Endothelial cell of umbilical vein (primary cell): ENCODE measurements at regions of chr1 and their contacts with region 1.

Region 1: GRCh38 chr1:108125312-108126138 is 74.6 kb downstream of the SLC25A24 start:
- DNase-seq: peak; percentile 78
- H3K4me3 ChIP-seq: no peak overlapping the region
- H3K27ac ChIP-seq: no peak overlapping the region
- H3K4me1 ChIP-seq: no peaks in the 10 kb centered on the region
- H3K27me3 ChIP-seq: no peaks in the 10 kb centered on the region
- CTCF ChIP-seq: peak; percentile 86
- POLR2A ChIP-seq: no peak

Region 2: DNA sequence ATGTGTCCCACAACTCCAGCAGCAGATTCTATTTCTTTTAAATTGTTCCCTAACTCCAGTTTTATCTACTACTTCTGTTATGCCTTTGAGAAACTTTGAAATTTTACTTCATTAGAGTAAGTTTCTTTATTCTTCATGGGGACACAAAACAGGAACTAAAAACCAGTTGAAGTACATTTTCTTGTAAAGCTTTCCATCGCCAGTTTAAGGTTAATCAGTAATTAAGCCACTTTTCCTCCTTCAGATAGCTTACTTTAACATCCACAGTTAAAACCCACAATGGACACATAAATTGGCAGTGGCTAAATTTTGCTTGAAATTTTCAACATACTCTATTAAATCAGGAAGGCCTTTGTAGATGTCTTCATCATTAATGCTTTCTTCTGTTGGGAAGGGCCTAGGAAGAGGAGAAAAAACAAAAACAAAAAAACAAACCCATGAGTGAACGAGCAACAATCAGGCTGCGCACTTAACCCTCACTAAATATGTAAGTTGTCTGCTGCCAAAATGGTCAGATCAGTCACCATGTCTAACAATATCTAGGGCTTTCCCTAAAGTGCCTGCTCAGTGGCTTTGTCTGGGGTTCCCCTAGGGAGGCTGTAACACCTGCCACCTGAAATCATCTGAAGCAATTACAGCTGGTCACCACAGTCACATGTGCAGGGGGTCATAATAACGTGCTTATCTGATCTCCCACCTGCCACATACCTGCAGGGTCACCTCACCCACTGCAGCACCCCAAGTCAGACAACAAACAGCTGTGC is 348.4 kb before region 1 on chr1:
- CTCF ChIA-PET with region 1: interaction called, 919 read pairs
- POLR2A ChIA-PET with region 1: interaction called, 3 read pairs
- dilution Hi-C with region 1: no loop called
- intact Hi-C with region 1: loop called (anchors 1 kb)
- DNase-seq: no peak
- H3K4me3 ChIP-seq: no peak overlapping the region
- H3K27ac ChIP-seq: no peak overlapping the region
- H3K4me1 ChIP-seq: no peaks in the 10 kb centered on the region
- H3K27me3 ChIP-seq: no peaks in the 10 kb centered on the region
- CTCF ChIP-seq: no peak
- POLR2A ChIP-seq: no peak

Region 3: GRCh38 chr1:107897438-107898345 is 227.8 kb before region 1 on chr1:
- CTCF ChIA-PET with region 1: interaction called, 16 read pairs
- POLR2A ChIA-PET with region 1: no interaction called
- dilution Hi-C with region 1: no loop called
- intact Hi-C with region 1: no loop called
- DNase-seq: peak; percentile 20
- H3K4me3 ChIP-seq: no peak overlapping the region
- H3K27ac ChIP-seq: no peak overlapping the region
- H3K4me1 ChIP-seq: no peaks in the 10 kb centered on the region
- H3K27me3 ChIP-seq: no peaks in the 10 kb centered on the region
- CTCF ChIP-seq: no peak
- POLR2A ChIP-seq: no peak

Region 4: DNA sequence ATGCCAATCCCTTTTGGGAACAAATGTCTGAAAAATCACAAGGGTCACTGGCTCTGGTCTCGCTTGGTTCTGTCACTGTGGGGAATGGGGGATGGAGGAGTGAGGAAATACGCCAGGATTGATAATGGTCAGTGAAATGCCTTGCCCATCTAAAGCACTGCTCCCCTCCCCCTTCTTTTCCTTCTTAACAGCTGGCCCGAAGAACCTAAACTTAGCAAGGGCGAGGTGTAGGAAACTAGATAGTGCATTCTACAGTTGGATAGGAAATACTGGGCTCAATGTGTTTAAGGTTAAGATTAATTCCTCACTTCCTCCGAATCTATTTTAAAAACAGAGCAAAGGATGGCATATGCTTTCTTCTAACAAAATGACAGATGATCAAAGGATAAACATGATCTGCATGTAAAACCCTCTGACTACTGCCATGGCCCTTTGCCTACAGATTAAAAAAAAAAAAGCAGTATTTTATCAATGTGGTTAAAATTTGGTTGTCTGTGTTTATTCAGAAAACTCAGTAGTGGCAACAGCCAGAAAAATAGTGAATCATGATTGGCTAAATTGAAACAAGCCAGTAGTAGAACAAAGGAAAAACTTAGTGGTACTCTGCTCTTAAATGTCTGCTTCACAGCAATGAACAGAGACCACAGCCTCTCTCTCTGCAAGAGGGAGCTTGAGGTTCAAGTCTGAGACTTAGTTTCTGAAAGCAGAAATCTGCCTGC is 74.5 kb before region 1 on chr1:
- CTCF ChIA-PET with region 1: no interaction called
- POLR2A ChIA-PET with region 1: no interaction called
- dilution Hi-C with region 1: no loop called
- intact Hi-C with region 1: loop called (anchors 2 kb)
- DNase-seq: peak; percentile 80
- H3K4me3 ChIP-seq: no peak overlapping the region
- H3K27ac ChIP-seq: peak overlapping the region; percentile 13
- H3K4me1 ChIP-seq: peaks cover 18% of the 10 kb centered on the region
- H3K27me3 ChIP-seq: no peaks in the 10 kb centered on the region
- CTCF ChIP-seq: no peak
- POLR2A ChIP-seq: no peak